Right ventricle myocardium inferior (tissue), 1 donor: ENCODE measurements at regions of chr2 and their contacts with region 1.

Region 1: DNA sequence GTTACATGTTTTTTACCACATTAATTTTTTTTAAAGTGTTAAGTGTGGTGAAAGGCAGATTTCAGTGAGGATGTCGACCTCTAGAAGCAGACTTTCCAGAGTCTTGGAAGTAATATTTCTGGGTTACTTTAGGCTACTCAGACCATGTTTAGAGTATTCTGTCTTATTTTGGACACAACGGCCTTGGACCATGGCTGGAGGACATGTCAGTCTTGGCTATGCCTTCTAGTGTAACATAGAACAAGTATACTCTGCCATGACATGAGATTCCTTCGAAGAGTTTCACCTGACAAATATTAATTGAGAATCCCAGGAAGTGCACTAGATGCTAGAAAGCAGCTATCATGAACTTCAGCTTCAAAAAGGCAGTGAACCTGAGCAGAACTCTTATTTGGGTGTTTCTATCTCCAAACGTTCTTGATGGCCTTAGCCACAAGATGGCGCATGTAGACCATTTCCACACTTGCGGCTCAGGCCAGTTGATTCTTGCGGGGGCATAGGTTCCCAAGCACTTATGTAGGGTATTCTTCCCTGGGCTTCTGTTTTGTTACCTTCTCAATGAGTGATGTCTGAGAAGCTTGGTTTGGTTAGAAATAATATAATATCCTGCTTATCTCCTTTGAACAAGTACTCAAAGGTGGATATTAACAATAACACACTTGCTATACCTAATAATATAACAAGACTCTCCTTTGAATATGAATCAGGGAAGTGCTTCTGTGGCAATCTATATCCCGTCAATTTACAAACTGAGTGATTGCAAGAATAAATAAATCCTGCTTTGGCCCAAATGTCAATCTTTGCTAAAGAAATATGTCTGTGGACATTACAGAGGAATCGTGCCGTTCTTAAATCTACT is 62.0 kb downstream of the CACNB4 start:
- DNase-seq: no peak
- ATAC-seq: peak; percentile 76

Region 2: DNA sequence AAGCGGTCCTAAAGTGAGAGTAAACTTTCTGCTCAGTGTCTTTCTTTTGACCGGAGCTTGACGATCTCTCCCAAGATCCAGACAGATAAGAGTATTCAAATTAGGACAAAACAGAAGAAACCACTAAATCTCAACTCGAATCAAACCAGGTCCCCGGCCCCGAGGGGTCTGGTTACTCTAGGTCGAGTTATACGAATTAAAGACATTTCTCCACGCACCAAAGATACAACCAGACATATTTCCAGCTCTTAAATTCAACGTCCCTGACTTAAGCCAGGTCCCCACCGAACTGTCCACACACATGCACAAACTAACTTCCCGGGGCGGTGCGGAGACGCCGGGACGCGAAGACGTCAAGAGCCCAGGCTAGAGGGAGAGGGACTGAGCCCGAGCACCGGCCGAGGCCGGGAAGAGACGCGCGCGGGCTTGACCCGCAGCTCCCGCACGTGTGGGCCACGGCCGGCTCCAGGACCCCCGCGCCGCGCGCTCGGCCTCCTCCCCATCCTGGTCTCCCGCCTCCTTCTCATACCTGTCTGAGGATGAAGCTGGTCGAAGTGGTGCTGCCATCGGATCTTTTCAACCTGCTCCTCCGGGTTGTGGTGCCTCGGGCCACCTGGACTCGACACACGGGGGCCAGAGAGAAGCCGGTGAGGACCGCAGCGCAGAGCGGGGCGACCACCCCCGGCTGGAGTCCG is 61.1 kb after region 1 on chr2:
- intact Hi-C with region 1: loop called (anchors 10 kb)
- DNase-seq: peak; percentile 79
- ATAC-seq: peak; percentile 85

Region 3: GRCh38 chr2:152175458-152176325 is 138.9 kb after region 1 on chr2 and contains the start of gene STAM2:
- intact Hi-C with region 1: loop called (anchors 1 kb)
- DNase-seq: peak; percentile 95
- ATAC-seq: peak; percentile 95
- total RNA-seq, gene STAM2: 27.0 TPM

Region 4: DNA sequence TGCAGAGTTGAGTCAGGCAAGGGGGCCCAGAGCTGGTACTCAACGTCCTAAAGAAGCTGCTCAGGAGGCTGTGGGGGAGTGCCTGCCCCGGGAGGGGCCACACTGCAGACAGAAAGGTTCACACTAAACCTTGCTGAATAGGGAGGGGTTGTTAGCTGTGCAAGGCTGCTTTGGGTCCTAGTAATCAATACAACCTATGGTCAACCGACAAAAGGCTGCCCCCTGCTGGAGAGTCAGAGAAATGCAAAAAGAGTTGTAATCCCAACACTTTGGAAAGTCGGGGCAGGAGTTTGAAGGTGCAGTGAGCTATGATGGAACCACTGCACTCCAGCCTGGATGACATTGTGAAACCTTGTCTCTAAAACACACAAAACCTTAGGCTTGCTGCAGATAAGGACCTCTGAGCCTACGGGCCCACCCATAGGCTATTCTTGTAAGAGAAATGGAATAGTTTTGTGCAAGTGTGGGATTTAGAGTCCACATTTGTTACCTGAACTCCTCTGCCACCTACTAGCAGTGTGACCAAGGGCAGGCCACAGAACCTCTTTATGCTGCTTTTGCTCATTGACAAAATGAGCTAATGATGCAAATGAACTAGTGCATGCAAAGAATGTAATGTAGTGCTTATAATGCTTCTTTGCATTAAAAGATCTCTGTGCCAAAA is 598.9 kb after region 1 on chr2:
- intact Hi-C with region 1: loop called (anchors 5 kb)
- DNase-seq: no peak
- ATAC-seq: peak; percentile 56

Region 5: GRCh38 chr2:152717228-152718075 is 680.6 kb after region 1 on chr2 and contains the start of gene PRPF40A:
- intact Hi-C with region 1: loop called (anchors 5 kb)
- DNase-seq: peak; percentile 98
- ATAC-seq: peak; percentile 94
- total RNA-seq, gene PRPF40A: 36.0 TPM

Region 6: DNA sequence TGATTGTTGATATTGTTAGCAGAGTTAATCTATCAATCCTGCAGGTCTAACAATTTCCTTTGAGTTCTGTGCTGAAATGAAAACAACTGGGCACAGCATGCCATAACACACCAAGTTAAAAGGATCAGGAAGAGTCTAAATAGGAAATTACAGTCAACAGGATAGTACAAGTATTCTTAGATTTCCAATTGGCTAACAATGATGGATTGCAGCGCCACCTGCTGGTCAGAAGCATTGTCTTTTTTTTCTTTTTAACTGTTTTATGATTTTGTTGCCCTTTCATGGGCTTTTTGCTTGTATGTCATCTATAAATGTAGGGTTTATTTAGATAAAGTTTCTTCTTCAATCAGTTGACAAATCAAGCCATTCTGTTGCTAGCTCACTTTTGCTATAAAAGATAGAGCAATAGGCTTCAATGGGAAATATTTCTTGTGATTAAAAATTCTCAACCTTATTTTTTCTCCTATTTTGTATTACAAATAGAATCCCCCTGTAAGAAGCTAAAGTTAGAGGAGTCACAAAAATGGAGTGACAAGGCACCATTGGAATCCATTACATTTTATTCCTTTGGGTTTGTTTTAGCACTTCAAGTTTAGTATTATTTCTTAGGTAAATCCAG is 1482.5 kb after region 1 on chr2:
- intact Hi-C with region 1: loop called (anchors 10 kb)
- DNase-seq: no peak
- ATAC-seq: no peak